Astrocyte of the cerebellum (primary cell): ENCODE measurements at regions of chr11 and their contacts with region 1.

Region 1: GRCh38 chr11:95524314-95525036 is 265.1 kb downstream of the FAM76B start:
- DNase-seq: no peak
- H3K4me3 ChIP-seq: no peak overlapping the region
- CTCF ChIP-seq: no peak

Region 2: GRCh38 chr11:95625164-95625900 is 100.9 kb after region 1 on chr11:
- in situ Hi-C with region 1: loop called (anchors 5 kb)
- DNase-seq: no peak
- H3K4me3 ChIP-seq: no peak overlapping the region
- CTCF ChIP-seq: no peak

Region 3: DNA sequence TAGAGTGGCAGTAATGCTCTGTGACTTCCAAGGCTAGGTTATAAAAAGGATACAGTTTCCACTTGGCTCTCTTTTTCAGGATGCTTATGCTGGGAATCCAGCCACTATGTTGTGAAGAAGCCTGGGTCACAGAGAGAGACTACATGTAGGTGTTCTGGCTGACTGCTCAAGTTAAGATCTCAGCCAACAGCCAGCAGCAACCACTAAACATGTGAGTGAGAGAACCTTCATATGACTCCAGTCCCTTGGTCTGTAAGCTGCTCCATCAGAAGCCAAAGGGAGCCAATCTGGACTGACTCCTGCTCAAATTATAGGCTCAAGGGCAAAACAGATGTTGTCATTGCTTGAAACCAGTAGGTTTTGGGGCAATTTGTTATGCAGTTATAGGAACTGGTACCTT is 655.9 kb after region 1 on chr11:
- in situ Hi-C with region 1: no loop called
- DNase-seq: no peak
- H3K4me3 ChIP-seq: no peak overlapping the region
- CTCF ChIP-seq: no peak